Activated CD4-positive, alpha-beta memory T cell treated with anti-CD3 and anti-CD28 coated beads, Interleukin-2, amount 10 ng/mL, durations not matched to agents 7 days and 5 days (primary cell): ENCODE measurements at regions of chr1 and their contacts with region 1.

Region 1: DNA sequence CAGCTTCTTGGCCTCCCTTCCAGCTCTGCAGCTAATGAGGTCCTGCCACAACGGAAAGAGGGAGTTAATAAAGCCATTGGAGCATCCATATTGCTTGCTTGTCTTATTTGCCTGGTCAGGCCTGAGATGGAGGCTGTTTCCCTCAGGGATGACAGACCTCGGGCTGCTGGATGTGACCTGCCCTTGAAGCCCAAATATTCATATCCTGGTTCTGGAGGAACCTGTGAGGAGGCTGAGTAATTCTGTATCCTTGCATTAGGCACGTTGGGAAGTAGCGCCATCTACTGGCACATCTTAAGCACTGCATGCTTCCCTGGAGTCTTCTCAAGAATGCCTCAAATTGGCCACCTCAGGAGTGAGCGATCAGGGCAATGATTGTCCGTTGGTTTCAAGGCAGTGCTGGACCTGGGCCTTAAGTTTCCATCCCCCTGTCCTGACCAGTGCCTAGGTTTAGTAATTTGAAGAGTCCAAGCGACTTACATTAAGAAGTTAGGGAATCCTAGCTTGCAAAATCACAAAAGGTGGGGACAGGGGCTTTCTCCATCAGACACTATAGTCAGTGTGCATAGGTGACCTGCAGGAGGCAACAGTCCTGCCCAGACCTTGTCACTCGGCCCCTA is 13.8 kb upstream of the NASP start:
- DNase-seq: peak; percentile 79
- H3K4me3 Mint-ChIP-seq: no peak overlapping the region
- H3K27ac Mint-ChIP-seq: no peak overlapping the region
- H3K4me1 Mint-ChIP-seq: no peaks in the 10 kb centered on the region
- H3K27me3 Mint-ChIP-seq: no peaks in the 10 kb centered on the region

Region 2: GRCh38 chr1:45490626-45491486 is 79.2 kb before region 1 on chr1 and contains the start of gene TESK2:
- CTCF ChIA-PET with region 1: interaction called, 15 read pairs
- POLR2A ChIA-PET with region 1: no interaction called
- DNase-seq: peak; percentile 98
- H3K4me3 Mint-ChIP-seq: no peak within 1 kb of the TSS
- H3K27ac Mint-ChIP-seq: no peak within 1 kb of the TSS
- H3K4me1 Mint-ChIP-seq: peaks cover 7% of the 10 kb centered on the region
- H3K27me3 Mint-ChIP-seq: peaks cover 7% of the 10 kb centered on the region
- total RNA-seq, gene TESK2: 3.7 to 4.3 TPM

Region 3: GRCh38 chr1:45499415-45499769 is 70.7 kb before region 1 on chr1:
- CTCF ChIA-PET with region 1: interaction called, 26 read pairs
- POLR2A ChIA-PET with region 1: interaction called, 6 read pairs
- DNase-seq: peak; percentile 40
- H3K4me3 Mint-ChIP-seq: peak overlapping the region; percentile 88
- H3K27ac Mint-ChIP-seq: peak overlapping the region; percentile 77
- H3K4me1 Mint-ChIP-seq: peaks cover 36% of the 10 kb centered on the region
- H3K27me3 Mint-ChIP-seq: no peaks in the 10 kb centered on the region

Region 4: GRCh38 chr1:45512641-45513054 is 57.4 kb before region 1 on chr1:
- CTCF ChIA-PET with region 1: interaction called, 120 read pairs
- POLR2A ChIA-PET with region 1: interaction called, 28 read pairs
- DNase-seq: peak; percentile 68
- H3K4me3 Mint-ChIP-seq: no peak overlapping the region
- H3K27ac Mint-ChIP-seq: peak overlapping the region; percentile 47
- H3K4me1 Mint-ChIP-seq: peaks cover 19% of the 10 kb centered on the region
- H3K27me3 Mint-ChIP-seq: no peaks in the 10 kb centered on the region

Region 5: GRCh38 chr1:45557422-45557944 is 12.6 kb before region 1 on chr1:
- CTCF ChIA-PET with region 1: interaction called, 12 read pairs
- POLR2A ChIA-PET with region 1: interaction called, 3 read pairs
- DNase-seq: no peak
- H3K4me3 Mint-ChIP-seq: no peak overlapping the region
- H3K27ac Mint-ChIP-seq: peak overlapping the region; percentile 38
- H3K4me1 Mint-ChIP-seq: peaks cover 19% of the 10 kb centered on the region
- H3K27me3 Mint-ChIP-seq: no peaks in the 10 kb centered on the region

Region 6: GRCh38 chr1:45583264-45583665 is 13.2 kb after region 1 on chr1:
- CTCF ChIA-PET with region 1: interaction called, 13 read pairs
- POLR2A ChIA-PET with region 1: interaction called, 35 read pairs
- DNase-seq: peak; percentile 96
- H3K4me3 Mint-ChIP-seq: peak overlapping the region; percentile 88
- H3K27ac Mint-ChIP-seq: peak overlapping the region; percentile 98
- H3K4me1 Mint-ChIP-seq: peaks cover 29% of the 10 kb centered on the region
- H3K27me3 Mint-ChIP-seq: no peaks in the 10 kb centered on the region